Caco-2 (cell line): ENCODE measurements at regions of chr12 and their contacts with region 1.

Region 1: DNA sequence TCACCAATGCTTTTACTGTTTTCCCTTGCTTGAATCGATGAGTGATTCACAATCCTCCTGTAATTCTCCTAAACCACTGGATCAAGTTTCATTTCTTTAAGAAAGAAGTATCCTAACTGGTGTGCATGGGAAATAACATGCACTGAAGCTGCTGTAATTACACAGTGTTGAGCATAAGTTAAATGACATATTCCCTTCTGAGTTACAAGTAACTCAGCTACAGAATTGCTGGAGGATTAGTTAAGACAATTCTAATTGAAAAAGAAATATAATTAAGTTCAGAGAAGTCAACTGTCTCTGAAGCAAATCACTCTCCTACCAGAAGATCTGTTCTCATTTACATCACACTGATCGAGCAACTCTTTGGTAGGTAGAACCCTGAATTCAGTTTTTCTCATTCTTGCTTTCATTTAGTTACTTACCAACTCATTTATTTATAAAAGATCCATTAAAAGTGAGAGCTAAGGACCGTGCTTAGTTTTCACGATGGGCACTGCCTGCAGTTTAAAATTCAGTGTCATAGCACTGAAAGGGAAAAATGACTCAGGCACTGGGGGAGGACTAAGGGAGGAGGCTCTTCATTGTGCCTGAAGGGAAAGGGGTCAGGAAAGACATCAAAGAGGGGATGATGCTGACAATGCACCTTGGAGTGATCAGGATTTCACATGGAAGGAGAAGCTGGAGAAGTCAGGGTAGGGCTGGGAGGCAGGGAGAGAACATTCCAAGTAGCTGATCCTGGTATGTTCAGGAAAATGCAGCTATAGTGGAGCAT is 327.2 kb downstream of the EMP1 start:
- DNase-seq: no peak
- H3K4me3 ChIP-seq: no peak overlapping the region
- H3K4me3 Mint-ChIP-seq: no peak overlapping the region
- H3K27ac Mint-ChIP-seq: no peak overlapping the region
- H3K4me1 ChIP-seq: peaks cover 16% of the 10 kb centered on the region
- H3K4me1 Mint-ChIP-seq: no peaks in the 10 kb centered on the region
- H3K27me3 ChIP-seq: no peaks in the 10 kb centered on the region
- H3K27me3 Mint-ChIP-seq: peaks cover 4% of the 10 kb centered on the region
- CTCF ChIP-seq: no peak

Region 2: GRCh38 chr12:13367973-13368372 is 155.7 kb before region 1 on chr12:
- CTCF ChIA-PET with region 1: no interaction called
- POLR2A ChIA-PET with region 1: no interaction called
- intact Hi-C with region 1: loop called (anchors 2 kb)
- DNase-seq: no peak
- H3K4me3 ChIP-seq: no peak overlapping the region
- H3K4me3 Mint-ChIP-seq: no peak overlapping the region
- H3K27ac Mint-ChIP-seq: no peak overlapping the region
- H3K4me1 ChIP-seq: 0 out of 2 replicates have a peak, but pooled peaks cover 3% of the 10 kb centered on the region
- H3K4me1 Mint-ChIP-seq: no peaks in the 10 kb centered on the region
- H3K27me3 ChIP-seq: no peaks in the 10 kb centered on the region
- H3K27me3 Mint-ChIP-seq: no peaks in the 10 kb centered on the region
- CTCF ChIP-seq: no peak